ENCODE measurements at regions of chr9 and their contacts with region 1.

Region 1: GRCh38 chr9:26856413-26857032 is 36.1 kb downstream of the CAAP1 start:
- DNase-seq: no peak
- ATAC-seq: no peak
- H3K4me3 ChIP-seq: no peak overlapping the region
- H3K27ac ChIP-seq: no peak overlapping the region
- H3K4me1 ChIP-seq: no peaks in the 10 kb centered on the region
- H3K27me3 ChIP-seq: no peaks in the 10 kb centered on the region
- CTCF ChIP-seq: peak in 3 of 5 experiments; percentile 8 to 23 (median 20)
- POLR2A ChIP-seq: no peak

Region 2: DNA sequence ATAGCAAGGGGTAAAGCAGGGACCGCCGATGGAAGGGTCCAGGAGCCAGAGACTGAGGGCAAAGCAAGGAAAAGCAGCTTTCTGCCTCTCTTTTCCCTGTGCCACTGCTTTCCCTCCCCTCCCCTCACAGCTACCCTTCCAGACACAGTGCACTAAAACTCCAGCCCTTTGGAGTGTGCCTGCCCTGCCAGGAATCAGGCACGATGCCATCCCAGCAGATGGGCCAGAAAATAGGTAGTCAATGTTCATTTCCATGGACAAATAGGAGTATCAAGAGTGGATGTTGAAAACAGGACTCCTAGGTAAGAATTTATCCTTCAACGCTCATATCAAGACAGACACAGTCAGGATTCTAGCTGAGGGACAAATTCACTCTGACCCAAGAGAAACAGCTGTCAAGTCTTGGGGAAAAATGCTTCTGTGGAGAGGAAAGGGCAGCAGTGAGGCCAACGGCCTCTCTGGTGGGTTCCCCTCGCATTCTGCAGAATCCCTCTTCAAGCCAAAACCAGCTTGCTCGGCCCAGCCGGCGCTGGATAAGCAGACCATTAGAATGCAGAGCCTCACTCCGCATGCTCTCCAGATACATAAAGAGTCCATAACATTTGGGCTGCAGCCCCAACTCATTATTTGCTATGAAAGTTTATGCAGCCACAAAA is 101.9 kb before region 1 on chr9:
- in situ Hi-C with region 1: loop called in 1 of 4 experiments (anchors 25 kb)
- intact Hi-C with region 1: no loop called
- DNase-seq: no peak
- ATAC-seq: no peak
- H3K4me3 ChIP-seq: no peak overlapping the region
- H3K27ac ChIP-seq: no peak overlapping the region
- H3K4me1 ChIP-seq: no peaks in the 10 kb centered on the region
- H3K27me3 ChIP-seq: no peaks in the 10 kb centered on the region
- CTCF ChIP-seq: no peak
- POLR2A ChIP-seq: no peak